ENCODE measurements at regions of chr14 and their contacts with region 1.

Region 1: DNA sequence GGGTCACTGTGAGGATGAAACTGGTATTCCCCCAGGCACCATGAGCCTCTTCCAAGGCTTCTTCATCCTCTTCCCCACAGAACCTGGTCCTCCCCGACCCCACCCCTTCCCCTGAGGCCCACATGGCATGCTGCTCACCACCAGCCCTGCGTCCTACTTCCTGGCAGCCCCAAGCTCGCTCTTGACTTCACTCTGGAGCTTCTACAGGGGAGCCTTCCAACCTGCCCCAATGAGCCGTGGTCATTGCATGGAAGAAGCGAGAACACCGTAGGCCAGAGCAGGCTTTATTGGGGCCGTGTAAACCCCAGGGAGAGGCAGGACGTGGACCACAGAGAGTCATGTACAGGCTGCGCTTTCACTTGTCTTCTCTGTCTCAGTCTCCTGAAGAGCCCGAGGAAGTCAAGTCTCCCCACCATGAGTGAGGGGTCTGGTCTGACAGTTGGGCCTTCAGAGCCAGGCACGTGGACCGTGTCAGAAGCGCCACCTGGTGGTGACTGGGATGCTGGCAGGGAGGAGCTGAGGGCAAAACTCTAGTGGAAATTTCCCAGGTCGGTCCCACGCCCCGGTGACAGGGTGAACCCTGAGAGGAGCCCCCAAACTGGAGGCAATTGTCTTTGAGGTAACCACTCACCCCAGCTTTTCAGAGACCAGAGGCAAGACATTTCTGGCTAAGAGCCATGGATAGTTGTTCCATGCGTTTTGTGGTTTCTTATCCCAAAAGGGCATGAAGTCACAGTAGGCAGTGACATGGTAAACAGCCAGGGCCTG is 17.5 kb downstream of the RPS6KL1 start:
- DNase-seq: peak; percentile 89

Region 2: GRCh38 chr14:74860906-74861733 is 44.4 kb before region 1 on chr14:
- intact Hi-C with region 1: loop called (anchors 2 kb)
- DNase-seq: peak; percentile 94